ENCODE measurements at regions of chr4 and their contacts with region 1.

Region 1: GRCh38 chr4:152807294-152807829 is 27.6 kb downstream of the ARFIP1 start:
- DNase-seq: no peak
- H3K4me3 Mint-ChIP-seq: peak overlapping the region; percentile 32
- H3K27ac Mint-ChIP-seq: peak overlapping the region; percentile 54
- H3K4me1 Mint-ChIP-seq: peaks cover 20% of the 10 kb centered on the region
- H3K27me3 Mint-ChIP-seq: no peaks in the 10 kb centered on the region

Region 2: DNA sequence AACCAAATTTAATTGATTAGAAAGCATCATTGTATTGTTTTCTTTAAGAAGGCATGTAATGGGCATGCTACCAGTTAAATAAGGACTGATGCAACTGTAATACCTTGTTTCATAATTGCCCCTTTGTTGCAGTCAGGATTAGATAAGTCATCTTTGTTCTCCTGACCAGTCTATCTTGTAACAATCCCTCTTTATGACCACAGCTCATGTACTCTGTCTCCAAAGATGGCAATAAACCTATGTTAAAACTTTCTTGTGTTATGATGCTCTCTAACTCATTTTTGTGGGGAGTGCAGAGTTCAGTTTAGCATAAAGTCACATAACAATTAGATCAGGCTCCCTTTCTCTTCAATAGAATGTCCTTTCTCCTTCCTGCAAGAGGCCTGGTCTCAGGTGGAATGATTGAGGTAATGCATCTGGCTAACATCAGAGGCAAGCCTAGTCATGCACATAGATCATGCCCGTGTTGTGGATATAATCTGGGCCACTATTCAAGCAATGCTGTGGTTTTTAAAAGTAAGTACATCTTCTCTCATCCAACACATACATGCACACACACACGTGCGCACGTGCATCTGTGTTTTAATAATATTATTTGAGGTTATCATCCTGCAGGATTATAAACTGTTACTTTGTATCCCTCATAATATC is 173.1 kb before region 1 on chr4:
- intact Hi-C with region 1: no loop called
- DNase-seq: no peak
- H3K4me3 Mint-ChIP-seq: no peak overlapping the region
- H3K27ac Mint-ChIP-seq: no peak overlapping the region
- H3K4me1 Mint-ChIP-seq: peaks cover 25% of the 10 kb centered on the region
- H3K27me3 Mint-ChIP-seq: no peaks in the 10 kb centered on the region

Region 3: GRCh38 chr4:152795891-152796290 is 11.5 kb before region 1 on chr4:
- intact Hi-C with region 1: loop called (anchors 2 kb)
- DNase-seq: no peak
- H3K4me3 Mint-ChIP-seq: no peak overlapping the region
- H3K27ac Mint-ChIP-seq: no peak overlapping the region
- H3K4me1 Mint-ChIP-seq: peaks cover 5% of the 10 kb centered on the region
- H3K27me3 Mint-ChIP-seq: no peaks in the 10 kb centered on the region

Region 4: DNA sequence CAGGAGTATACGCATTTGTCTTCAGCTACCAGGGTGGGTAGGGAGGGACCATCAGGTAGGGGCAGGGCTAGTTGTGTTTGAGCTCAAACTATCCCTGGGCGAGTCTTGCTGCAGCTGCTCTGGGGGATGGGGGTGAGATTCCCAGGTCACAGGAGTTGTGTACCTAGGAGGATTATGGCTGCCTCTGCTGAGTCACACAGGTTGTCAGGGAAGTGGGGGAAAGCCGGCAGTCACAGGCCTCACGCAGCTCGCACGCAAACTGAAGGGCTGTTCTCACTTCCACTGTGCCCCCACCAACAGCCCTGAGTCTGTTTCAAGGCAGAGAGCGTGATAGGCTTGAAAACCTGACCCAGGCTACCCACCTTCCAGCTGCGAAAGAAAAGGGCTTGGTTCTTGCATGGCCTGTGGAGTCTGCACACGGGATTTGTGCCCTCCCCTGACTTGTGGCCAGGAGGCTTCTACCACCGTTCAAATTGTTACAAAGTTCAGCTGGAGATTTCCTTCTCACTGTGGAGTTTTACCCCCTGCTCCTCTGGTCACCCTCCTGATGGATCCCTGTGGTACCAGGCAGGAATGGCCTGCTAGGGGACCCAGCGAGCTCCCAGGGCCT is 36.2 kb after region 1 on chr4:
- intact Hi-C with region 1: loop called (anchors 1 kb)
- DNase-seq: no peak
- H3K4me3 Mint-ChIP-seq: no peak overlapping the region
- H3K27ac Mint-ChIP-seq: no peak overlapping the region
- H3K4me1 Mint-ChIP-seq: peaks cover 20% of the 10 kb centered on the region
- H3K27me3 Mint-ChIP-seq: no peaks in the 10 kb centered on the region

Region 5: DNA sequence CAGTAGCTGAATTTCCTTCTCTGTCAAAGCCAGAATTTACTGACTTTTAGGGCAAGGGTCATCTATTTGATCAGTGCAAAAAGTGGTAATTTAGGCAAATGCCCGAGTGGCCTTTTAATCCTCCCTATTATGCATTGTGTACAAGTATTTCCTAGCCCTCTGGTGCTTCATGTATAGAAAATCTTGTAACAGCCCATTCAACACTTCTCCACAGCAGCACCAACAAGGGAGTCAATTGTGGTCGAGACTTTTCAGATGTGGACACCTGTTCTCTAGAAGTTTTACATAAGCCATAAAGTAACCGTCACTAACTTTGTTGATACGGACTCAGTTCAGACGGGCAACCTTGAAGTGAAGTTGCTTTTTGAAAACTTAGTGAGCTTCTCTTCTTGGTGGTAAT is 77.8 kb after region 1 on chr4:
- intact Hi-C with region 1: no loop called
- DNase-seq: no peak
- H3K4me3 Mint-ChIP-seq: no peak overlapping the region
- H3K27ac Mint-ChIP-seq: no peak overlapping the region
- H3K4me1 Mint-ChIP-seq: peaks cover 4% of the 10 kb centered on the region
- H3K27me3 Mint-ChIP-seq: no peaks in the 10 kb centered on the region